Motor neuron (in vitro differentiated cells): ENCODE measurements at regions of chr3 and their contacts with region 1.

Region 1: DNA sequence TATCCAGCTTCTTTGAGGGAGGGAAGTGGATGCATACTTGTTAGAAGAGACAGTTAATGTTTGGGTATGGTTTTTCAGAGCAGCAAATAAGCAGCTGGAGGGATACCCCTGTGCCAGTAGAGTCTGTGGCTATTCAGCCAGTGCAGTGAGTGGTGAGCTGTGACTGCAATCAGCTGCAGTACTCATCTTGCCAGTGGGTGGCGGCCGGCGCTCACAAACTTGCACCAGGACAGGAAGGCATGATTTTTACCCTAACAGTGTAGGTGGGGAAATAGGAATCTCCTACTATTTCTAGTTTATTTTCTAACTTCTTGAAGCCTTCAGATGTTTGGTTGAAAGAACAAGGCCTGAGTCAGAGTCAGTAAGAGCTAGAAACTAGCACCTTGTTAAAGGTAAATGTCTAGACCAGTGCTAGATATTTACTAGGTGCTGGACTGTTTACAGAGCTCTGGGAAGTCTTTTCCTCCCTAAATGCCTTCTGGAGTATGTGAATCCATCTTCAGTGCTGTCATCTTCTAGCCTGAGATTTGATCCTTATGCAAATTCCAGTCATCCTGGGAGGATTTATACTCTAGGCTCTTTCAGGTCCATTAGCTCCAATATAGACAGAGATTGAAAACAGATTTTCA is 23.6 kb downstream of the TIMP4 start:
- ATAC-seq: peak; percentile 89 to 99 (median 94)
- H3K4me3 ChIP-seq: no peak overlapping the region
- H3K27ac ChIP-seq: no peak overlapping the region
- H3K4me1 ChIP-seq: peaks cover 0 to 3% of the 10 kb centered on the region in 2 donors

Region 2: GRCh38 chr3:11995120-11995519 is 140.0 kb before region 1 on chr3:
- in situ Hi-C with region 1: no loop called
- ATAC-seq: peak in 7 of 8 experiments; percentile 53 to 95 (median 84)
- H3K4me3 ChIP-seq: no peak overlapping the region
- H3K27ac ChIP-seq: no peak overlapping the region
- H3K4me1 ChIP-seq: peaks cover 0 to 5% of the 10 kb centered on the region in 2 donors

Region 3: GRCh38 chr3:12471243-12471651 is 336.1 kb after region 1 on chr3:
- in situ Hi-C with region 1: loop called in 7 of 9 experiments (anchors 10 to 25 kb)
- ATAC-seq: peak in 1 of 8 experiments; percentile 52
- H3K4me3 ChIP-seq: no peak overlapping the region
- H3K27ac ChIP-seq: no peak overlapping the region
- H3K4me1 ChIP-seq: no peaks in the 10 kb centered on the region

Region 4: DNA sequence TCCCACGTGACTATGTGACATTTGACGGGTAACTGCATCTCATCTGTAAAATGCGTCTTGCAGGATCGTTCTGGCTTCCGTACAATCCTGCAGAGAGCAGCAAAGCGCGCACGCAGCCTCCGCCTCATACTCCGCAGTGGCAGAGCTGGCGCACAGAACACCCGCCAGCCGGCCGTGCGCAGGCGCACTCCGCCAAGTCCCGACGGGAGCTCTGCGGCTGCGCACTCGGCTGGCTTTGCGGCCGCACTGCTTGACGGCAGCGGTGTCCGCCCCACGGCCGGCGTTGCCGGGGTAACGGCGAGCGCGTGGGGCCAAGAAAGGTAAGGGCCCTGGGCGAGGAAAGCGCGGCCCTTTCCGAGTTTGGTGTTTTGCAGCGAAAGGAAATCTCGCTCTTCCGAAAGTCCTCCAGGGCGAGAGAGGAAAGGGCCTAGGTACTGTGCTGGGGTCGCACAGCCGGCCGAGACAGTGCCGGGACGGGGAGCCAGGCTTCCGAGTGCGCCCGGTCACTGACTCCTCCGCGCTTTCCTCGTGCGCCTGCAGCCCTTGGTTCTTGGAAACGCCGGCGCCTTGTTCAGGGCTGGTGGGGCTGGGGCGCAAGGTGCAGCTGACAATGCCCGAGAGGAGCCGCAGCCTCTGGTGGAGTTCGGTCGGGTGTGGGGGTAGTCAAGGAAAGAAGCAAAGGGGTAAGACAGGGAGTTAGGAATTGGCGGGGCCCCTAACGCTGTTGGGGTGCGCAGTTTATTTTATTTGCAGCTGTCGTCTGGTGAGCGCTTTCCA is 349.2 kb after region 1 on chr3 and contains the start of gene TSEN2:
- in situ Hi-C with region 1: loop called in 3 of 9 experiments (anchors 10 to 25 kb)
- ATAC-seq: peak; percentile 88 to 99 (median 98)
- H3K4me3 ChIP-seq: peak within 1 kb of the TSS; percentile 59 to 81 (median 75)
- H3K27ac ChIP-seq: peak within 1 kb of the TSS; percentile 69 to 83
- H3K4me1 ChIP-seq: peaks cover 9 to 12% of the 10 kb centered on the region in 2 donors
- total RNA-seq, gene TSEN2: 17.4 to 41.4 (median 20.8) TPM